ENCODE measurements at regions of chr2 and their contacts with region 1.

Region 1: DNA sequence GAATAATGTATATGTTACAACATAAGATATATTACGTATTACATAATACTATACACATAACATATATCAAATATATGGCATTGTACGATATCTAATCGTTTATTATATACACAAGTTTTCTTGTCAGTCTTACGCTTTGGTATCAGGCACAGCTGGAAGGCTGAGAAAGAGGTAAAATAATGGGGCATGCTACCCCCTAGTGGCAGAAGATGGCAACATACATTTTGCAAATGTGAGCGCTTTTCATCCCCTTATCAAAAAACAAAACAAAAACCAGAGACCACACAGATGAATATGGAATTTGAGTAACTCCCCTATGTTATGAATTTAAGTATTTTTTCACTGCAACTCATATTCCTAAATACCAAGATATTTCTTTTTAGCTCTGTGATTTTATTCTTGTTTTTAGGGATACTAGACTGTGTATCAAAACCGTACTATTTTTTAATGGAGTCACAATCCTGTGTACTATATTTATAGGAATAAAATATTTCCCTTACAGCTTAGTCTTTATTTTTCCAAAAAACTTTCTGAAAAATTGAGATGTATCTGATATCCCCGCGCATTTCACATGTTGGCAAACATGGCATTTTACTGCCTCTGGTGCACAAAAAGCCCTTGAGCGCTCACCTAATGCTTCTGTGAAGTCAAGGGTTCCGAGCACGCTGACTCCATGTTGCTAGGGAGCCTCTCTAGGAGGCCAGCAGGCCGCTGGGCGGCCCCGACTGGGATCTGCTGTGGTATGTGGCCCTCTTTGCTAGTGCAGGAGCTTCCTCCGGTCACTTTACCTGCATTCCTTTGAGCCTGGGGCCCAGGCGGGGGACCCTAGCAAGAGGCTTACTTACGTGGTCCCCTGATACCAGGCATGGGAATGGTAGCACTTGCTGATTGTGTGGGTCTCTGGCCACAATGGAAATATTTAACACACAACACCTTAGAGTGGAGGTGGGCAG is 62.5 kb downstream of the SLC4A3 start:
- DNase-seq: peak; percentile 65
- ATAC-seq: peak; percentile 34
- H3K4me3 ChIP-seq: no peak overlapping the region
- H3K4me3 Mint-ChIP-seq: no peak overlapping the region
- H3K27ac ChIP-seq: no peak overlapping the region
- H3K27ac Mint-ChIP-seq: no peak overlapping the region
- H3K4me1 ChIP-seq: peaks cover 5 to 6% of the 10 kb centered on the region in 2 donors
- H3K4me1 Mint-ChIP-seq: peaks cover 8% of the 10 kb centered on the region
- H3K27me3 ChIP-seq: peaks cover 0 to 12% (median 2%) of the 10 kb centered on the region in 4 experiments
- H3K27me3 Mint-ChIP-seq: peaks cover 30% of the 10 kb centered on the region
- CTCF ChIP-seq: peak; percentile 86

Region 2: DNA sequence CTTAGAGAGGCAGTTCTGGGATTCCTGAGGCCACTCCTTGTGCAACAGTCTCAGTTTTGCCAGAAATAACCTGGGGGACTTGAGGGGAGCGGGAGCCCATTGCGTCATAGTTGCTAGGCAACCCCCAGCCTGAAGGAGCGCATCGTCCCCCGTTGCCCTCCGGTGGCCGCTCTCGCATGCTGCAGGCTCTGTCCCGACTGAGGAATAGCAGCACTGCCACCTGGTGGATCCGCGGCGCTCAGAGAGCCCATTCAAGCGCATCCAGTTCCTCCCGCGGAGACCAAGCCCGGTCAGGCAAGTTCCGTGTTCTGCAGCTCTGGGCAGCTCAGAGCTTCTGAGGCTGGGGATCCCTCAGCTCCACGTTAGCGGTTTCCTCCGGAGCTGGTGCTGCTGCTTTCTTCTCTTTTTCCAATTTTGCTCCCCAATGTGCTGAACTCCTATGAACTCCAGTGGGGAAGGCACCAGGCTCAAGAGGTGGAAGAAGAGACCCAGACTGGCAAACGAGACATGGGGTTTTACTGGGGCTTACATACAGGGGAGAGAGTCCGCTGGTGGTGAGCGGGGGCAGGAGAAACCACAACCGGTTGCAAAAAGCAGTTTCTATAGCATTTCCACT is 47.4 kb before region 1 on chr2:
- CTCF ChIA-PET with region 1: interaction called, 7 read pairs
- POLR2A ChIA-PET with region 1: interaction called, 6 read pairs
- intact Hi-C with region 1: loop called (anchors 2 kb)
- DNase-seq: peak; percentile 96
- ATAC-seq: peak; percentile 100
- H3K4me3 ChIP-seq: peak overlapping the region in 4 of 5 experiments; percentile 10 to 40 (median 27)
- H3K4me3 Mint-ChIP-seq: peak overlapping the region; percentile 75
- H3K27ac ChIP-seq: no peak overlapping the region
- H3K27ac Mint-ChIP-seq: peak overlapping the region; percentile 50
- H3K4me1 ChIP-seq: peaks cover 8 to 17% of the 10 kb centered on the region in 2 donors
- H3K4me1 Mint-ChIP-seq: peaks cover 15% of the 10 kb centered on the region
- H3K27me3 ChIP-seq: peaks cover 0 to 37% (median 4%) of the 10 kb centered on the region in 4 experiments
- H3K27me3 Mint-ChIP-seq: peaks cover 31% of the 10 kb centered on the region
- CTCF ChIP-seq: peak; percentile 99

Region 3: GRCh38 chr2:219701847-219702634 is 12.1 kb after region 1 on chr2:
- CTCF ChIA-PET with region 1: interaction called, 22 read pairs
- POLR2A ChIA-PET with region 1: no interaction called
- intact Hi-C with region 1: no loop called
- DNase-seq: no peak
- ATAC-seq: no peak
- H3K4me3 ChIP-seq: no peak overlapping the region
- H3K4me3 Mint-ChIP-seq: no peak overlapping the region
- H3K27ac ChIP-seq: no peak overlapping the region
- H3K27ac Mint-ChIP-seq: no peak overlapping the region
- H3K4me1 ChIP-seq: no peaks in the 10 kb centered on the region
- H3K4me1 Mint-ChIP-seq: no peaks in the 10 kb centered on the region
- H3K27me3 ChIP-seq: peaks cover 0 to 12% (median under 1%) of the 10 kb centered on the region in 4 experiments
- H3K27me3 Mint-ChIP-seq: peaks cover 44% of the 10 kb centered on the region
- CTCF ChIP-seq: no peak

Measured in B cell (primary cell).